ENCODE measurements at regions of chr11 and their contacts with region 1.

Region 1: DNA sequence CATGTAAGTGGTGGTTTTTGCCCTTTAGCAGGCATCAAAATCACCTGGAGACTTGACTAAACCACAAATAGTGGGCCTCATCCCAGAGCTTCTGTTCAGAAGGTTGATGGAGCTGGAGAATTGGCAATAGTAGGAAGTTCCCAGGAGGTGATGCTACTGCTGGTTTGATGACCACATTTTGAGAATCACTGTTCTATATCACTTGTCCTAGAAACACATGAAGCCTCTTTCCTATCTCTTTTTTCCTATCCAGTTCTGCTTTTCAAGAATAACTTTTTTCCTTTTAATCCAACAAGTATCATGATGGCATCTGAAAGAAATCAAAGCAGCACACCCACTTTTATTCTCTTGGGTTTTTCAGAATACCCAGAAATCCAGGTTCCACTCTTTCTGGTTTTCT is at the start of gene OR5D13:
- DNase-seq: no peak
- H3K4me3 ChIP-seq: no peak within 1 kb of the TSS
- H3K27ac ChIP-seq: no peak within 1 kb of the TSS
- H3K4me1 ChIP-seq: no peaks in the 10 kb centered on the region
- H3K27me3 ChIP-seq: no peaks in the 10 kb centered on the region
- CTCF ChIP-seq: no peak
- total RNA-seq, gene OR5D13: not detected

Region 2: GRCh38 chr11:55707029-55707428 is 66.1 kb before region 1 on chr11:
- intact Hi-C with region 1: loop called (anchors 10 kb)
- DNase-seq: no peak
- H3K4me3 ChIP-seq: no peak overlapping the region
- H3K27ac ChIP-seq: no peak overlapping the region
- H3K4me1 ChIP-seq: no peaks in the 10 kb centered on the region
- H3K27me3 ChIP-seq: no peaks in the 10 kb centered on the region
- CTCF ChIP-seq: peak; percentile 15

Measured in kidney (tissue), 22 donors.